ENCODE measurements at regions of chr6 and their contacts with region 1.

Region 1: DNA sequence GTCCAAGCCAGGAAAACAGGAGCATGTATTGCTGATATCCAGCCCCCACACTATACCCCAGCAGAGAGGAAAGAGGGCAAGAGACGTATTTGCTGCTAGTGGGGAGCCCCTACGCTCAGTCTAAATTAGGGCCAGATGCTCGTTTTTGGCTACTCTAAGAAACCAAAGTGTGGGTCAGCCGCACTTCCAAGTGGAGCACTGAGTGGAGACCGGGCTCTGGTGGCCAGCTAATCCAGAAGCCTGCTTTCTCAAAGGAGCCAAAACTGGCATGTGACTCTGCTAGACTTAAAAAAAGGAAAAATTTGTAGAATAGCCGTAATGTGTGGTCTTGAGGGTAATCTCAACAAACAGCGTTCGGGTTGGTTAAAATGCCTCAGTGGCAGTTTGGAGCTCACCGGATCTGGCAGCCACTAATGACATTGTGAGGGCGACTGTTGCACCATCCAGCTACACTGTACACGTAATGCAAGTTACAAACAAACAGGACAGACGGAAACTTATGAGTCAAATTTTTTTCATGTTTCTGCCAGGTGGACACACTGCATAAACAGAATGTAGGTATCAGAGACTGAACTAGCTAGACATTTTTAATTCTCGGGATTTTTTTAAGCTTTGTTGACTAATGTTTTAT is 230.9 kb downstream of the FOXC1 start:
- DNase-seq: peak in 1 of 2 donors; percentile 81
- H3K4me3 ChIP-seq: peak overlapping the region; percentile 32 to 53
- H3K27ac ChIP-seq: peak overlapping the region; percentile 61 to 80
- H3K4me1 ChIP-seq: peaks cover 0 to 41% of the 10 kb centered on the region in 2 donors
- H3K27me3 ChIP-seq: no peaks in the 10 kb centered on the region
- CTCF ChIP-seq: no peak

Region 2: GRCh38 chr6:1885576-1886011 is 45.0 kb after region 1 on chr6:
- intact Hi-C with region 1: loop called (anchors 5 kb)
- DNase-seq: no peak
- H3K4me3 ChIP-seq: peak overlapping the region; percentile 14 to 47
- H3K27ac ChIP-seq: peak overlapping the region; percentile 89 to 92
- H3K4me1 ChIP-seq: peaks cover 6 to 34% of the 10 kb centered on the region in 2 donors
- H3K27me3 ChIP-seq: no peaks in the 10 kb centered on the region
- CTCF ChIP-seq: no peak

Region 3: DNA sequence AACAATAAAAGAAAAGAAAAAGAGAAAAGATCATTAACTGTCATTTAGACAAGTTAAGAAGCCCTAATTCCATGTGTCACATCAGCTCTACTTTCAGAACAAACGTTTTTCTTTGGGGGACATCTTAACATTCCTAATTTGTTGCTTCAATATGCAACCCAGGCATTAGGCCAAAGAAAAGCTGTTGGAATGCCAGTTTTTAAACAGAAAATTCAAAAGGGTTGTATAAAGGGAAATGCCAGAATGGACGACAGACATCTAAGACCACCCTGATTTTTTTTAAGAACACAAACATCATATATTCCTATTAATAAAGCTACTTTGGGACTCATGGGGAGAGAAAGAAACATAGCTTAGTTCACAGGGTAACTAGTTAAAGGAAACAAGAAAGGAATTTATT is 89.8 kb after region 1 on chr6:
- intact Hi-C with region 1: no loop called
- DNase-seq: no peak
- H3K4me3 ChIP-seq: peak overlapping the region; percentile 4 to 26
- H3K27ac ChIP-seq: peak overlapping the region; percentile 66
- H3K4me1 ChIP-seq: peaks cover 3 to 13% of the 10 kb centered on the region in 2 donors
- H3K27me3 ChIP-seq: no peaks in the 10 kb centered on the region
- CTCF ChIP-seq: no peak